Naive thymus-derived CD8-positive, alpha-beta T cell (primary cell): ENCODE measurements at regions of chr17 and their contacts with region 1.

Region 1: DNA sequence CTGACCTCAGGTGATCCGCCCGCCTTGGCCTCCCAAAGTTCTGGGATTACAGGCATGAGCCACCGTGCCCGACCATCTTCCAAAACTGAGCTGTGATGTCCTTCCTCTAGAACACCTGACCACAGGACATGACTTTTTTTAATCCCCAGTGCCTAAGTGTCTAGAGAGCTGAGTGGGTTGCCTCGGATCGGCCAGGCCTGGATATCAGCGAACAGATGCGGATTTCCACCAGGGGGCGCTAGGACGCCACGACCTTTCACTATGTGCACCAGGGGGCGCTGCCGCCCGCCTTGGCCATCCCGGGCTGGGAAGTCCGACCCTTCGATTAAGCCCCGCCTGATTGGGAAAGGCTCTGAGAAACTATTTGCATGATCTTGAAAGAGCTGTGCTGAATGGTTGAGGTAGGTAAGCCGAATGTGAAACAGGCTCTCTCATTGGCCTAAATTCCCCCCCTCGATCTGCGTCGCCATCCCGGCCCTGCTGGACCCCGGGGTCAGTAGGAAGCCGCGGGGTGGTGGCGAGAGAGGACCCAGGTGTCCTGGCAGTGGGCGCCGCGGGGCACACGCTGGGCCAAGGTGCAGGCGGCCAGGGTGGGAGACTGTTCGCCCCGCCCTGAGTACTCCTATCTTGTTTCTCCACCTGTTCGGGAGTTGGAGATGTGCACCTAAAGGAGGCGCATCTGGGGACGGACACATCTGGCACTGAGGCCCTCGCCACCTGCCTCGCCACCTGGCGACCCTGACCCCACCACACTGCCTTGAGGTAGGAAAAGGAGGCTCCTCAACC is at the start of gene ACBD4:
- DNase-seq: peak; percentile 92 to 100 (median 98)
- ATAC-seq: peak; percentile 86 to 88
- H3K4me3 Mint-ChIP-seq: peak within 1 kb of the TSS; percentile 86 to 94 (median 90)
- H3K27ac Mint-ChIP-seq: peak within 1 kb of the TSS; percentile 65 to 95 (median 88)
- H3K4me1 Mint-ChIP-seq: peaks cover 8 to 26% (median 18%) of the 10 kb centered on the region in 4 donors
- H3K27me3 Mint-ChIP-seq: peaks cover 0 to 3% (median 3%) of the 10 kb centered on the region in 5 donors
- polyA plus RNA-seq, gene ACBD4: 10.5 to 17.4 (median 11.7) TPM

Region 2: DNA sequence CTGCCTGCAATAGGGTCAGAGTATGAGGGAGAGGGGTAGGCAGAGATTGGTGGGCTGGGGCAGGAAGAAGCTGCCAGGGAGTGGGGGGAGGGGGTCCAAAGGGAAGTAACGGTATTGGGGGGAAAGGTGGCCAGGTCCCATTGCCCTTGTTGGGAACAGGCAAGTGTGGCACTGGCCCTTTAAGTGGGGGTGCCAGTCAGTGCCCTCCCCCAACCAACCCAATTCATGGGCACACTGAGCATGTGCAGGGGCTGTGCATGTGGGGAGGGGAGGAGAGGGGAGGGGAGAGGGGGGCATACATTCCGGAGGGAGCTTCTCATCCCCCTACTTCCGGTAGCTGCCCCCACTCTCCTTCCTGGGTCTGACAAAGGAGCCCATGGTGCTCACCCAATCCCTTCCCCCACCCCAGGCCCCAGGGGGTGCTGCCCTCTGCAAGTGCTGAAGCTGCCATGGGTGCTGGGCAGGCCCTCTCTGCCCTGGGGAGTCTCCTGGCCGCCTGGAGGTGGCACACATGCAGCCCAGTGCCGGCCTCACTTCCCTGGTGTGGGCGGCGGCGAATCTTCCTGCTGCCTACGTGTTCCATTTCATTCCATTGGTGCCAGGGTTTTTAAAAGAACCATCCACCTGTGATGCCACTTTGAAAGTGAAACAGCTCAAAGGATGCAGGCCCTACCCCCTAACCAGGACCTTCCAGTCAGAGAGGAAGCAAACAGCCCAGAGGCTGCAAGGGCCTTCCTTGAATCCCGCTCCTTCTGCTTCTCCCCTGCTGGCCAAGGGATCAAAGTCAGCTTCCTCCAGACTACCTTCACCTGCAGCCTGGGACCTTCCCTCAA is 37.3 kb after region 1 on chr17:
- POLR2A ChIA-PET with region 1: interaction called, 13 read pairs
- DNase-seq: peak; percentile 30 to 85 (median 48)
- ATAC-seq: peak; percentile 85
- H3K4me3 Mint-ChIP-seq: peak overlapping the region; percentile 75 to 89 (median 82)
- H3K27ac Mint-ChIP-seq: peak overlapping the region; percentile 91 to 98 (median 94)
- H3K4me1 Mint-ChIP-seq: peaks cover 6 to 32% (median 30%) of the 10 kb centered on the region in 4 donors
- H3K27me3 Mint-ChIP-seq: no peaks in the 10 kb centered on the region

Region 3: DNA sequence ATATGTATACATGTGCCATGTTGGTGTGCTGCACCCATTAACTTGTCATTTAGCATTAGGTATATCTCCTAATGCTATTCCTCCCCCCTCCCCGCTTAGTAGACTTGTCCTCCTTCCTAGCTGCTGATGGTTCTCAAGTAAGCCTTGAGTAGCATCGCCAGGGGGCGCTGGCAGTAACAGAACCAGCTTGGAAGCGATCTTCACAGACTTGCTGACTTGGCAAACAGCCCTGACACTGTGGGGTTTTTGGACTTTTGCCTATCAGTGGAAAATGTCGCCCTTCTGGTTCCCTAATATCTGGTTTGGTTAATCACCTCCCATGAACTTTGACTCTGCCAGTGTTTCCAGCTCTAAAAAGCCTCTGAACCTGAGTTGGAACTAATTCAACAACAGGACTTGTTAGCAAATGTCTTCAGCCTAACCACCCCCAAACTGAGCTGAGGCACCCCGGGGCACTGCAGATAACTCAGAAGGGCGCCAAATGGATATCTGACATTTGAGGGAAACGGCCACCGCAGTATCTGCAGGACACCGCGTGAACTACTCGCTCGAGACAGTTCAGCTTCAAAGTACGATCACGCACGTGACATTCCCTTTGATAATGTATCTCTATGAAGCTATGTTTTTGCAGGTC is 141.9 kb after region 1 on chr17:
- POLR2A ChIA-PET with region 1: no interaction called
- DNase-seq: peak; percentile 79 to 94 (median 85)
- ATAC-seq: peak; percentile 96 to 98
- H3K4me3 Mint-ChIP-seq: peak overlapping the region in 1 of 10 donors; percentile 15
- H3K27ac Mint-ChIP-seq: peak overlapping the region in 6 of 10 donors; percentile 46 to 85 (median 54)
- H3K4me1 Mint-ChIP-seq: peaks cover 7 to 10% (median 9%) of the 10 kb centered on the region in 4 donors
- H3K27me3 Mint-ChIP-seq: no peaks in the 10 kb centered on the region